PC-3 (cell line): ENCODE measurements at regions of chr12 and their contacts with region 1.

Region 1: GRCh38 chr12:68675101-68675842 is 11.5 kb upstream of the NUP107 start:
- DNase-seq: no peak
- ATAC-seq: no peak
- H3K4me3 ChIP-seq: no peak overlapping the region
- H3K27ac ChIP-seq: no peak overlapping the region
- H3K4me1 ChIP-seq: peaks cover 10% of the 10 kb centered on the region; the same call in 1 of the 2 replicates
- H3K27me3 ChIP-seq: no peaks in the 10 kb centered on the region
- CTCF ChIP-seq: no peak

Region 2: DNA sequence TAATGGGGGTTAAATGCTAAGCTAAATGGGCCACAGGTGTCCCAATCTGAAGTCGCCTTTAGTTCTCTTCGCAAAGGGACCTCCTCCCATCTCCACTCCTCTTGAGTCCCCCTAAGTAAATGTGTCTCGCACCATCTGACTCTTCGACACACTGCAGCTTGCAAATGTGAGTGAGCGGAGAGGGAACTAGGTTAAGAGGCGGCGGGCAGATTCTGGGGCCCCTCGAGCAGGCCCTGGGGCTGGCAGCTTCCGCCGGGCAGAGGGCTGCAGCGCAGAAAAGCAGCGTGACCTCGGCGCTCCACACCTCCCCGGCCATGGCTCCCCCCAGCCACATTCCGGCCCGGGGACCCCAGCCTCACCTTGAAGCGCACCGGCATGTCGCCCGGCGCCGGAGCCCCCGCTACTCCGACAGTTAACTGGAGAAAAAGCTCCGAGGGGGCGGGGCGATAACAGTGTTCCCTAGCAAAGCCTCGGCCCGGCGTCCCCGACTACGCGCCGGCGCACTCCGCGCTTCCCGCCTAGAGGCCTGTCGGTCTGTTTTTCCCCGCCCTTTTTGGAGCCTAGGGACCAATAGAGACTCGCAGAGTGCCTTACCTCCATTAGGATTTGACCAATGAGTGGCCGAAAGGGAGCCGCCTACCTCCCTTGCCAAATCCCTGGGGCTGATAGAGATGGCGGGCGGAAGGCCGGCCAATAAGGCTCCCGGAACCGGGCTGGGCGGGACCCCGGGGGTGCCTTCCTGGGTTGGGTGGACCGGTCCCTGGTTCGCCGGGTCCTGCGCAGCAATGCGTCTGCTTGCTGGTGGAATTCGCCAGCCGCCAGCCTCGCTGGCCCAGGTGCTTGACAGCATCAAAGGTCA is 343.2 kb before region 1 on chr12 and contains the start of gene MDM1:
- CTCF ChIA-PET with region 1: no interaction called
- POLR2A ChIA-PET with region 1: no interaction called
- intact Hi-C with region 1: loop called (anchors 5 kb)
- DNase-seq: peak; percentile 99
- ATAC-seq: peak; percentile 95
- H3K4me3 ChIP-seq: peak within 1 kb of the TSS; percentile 83
- H3K27ac ChIP-seq: no peak within 1 kb of the TSS
- H3K4me1 ChIP-seq: peaks cover 22% of the 10 kb centered on the region
- H3K27me3 ChIP-seq: no peaks in the 10 kb centered on the region
- CTCF ChIP-seq: no peak
- total RNA-seq, gene MDM1: 10.4 and 19.2 TPM in 2 replicates

Region 3: GRCh38 chr12:69024413-69024812 is 349.1 kb after region 1 on chr12:
- CTCF ChIA-PET with region 1: no interaction called
- POLR2A ChIA-PET with region 1: interaction called, 26 read pairs
- intact Hi-C with region 1: no loop called
- DNase-seq: peak; percentile 86
- ATAC-seq: peak; percentile 95
- H3K4me3 ChIP-seq: peak overlapping the region; percentile 62
- H3K27ac ChIP-seq: peak overlapping the region; percentile 85
- H3K4me1 ChIP-seq: peaks cover 35% of the 10 kb centered on the region
- H3K27me3 ChIP-seq: no peaks in the 10 kb centered on the region
- CTCF ChIP-seq: no peak